Endothelial cell of umbilical vein (primary cell): ENCODE measurements at regions of chr15 and their contacts with region 1.

Region 1: DNA sequence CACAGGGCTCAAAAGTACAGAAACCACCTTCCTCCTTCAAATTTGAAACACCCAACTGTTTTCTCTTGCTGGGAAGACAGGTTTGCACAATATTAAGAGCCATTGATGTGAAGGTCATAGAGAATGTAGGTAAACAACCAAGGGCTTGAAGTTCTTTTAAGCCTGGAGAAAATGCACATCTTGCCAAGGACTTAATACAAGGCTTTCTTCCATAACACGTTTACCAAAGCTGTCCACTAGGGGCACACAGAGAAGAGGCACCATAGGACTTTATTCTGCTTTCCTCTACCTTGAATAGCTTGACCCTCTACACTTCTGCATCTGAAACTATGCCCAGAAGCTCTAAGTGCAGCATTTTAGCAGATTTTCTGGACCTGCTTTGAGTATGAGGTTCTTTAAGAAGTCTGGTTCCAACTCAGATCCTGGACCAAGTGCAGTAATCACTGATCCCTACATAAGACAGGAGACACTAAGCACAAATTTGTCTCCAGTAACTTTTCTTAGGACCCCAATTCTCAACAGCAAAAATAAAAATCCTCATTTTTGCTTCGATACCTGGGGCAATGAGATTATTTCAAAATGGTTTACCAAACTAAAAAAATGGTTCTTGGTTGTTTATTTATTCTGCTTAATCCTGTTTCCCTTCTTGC is 138.0 kb downstream of the FBN1 start:
- DNase-seq: peak; percentile 77
- H3K4me3 ChIP-seq: no peak overlapping the region
- H3K27ac ChIP-seq: no peak overlapping the region
- H3K4me1 ChIP-seq: peaks cover 5% of the 10 kb centered on the region
- H3K27me3 ChIP-seq: no peaks in the 10 kb centered on the region
- CTCF ChIP-seq: peak; percentile 65 to 73
- POLR2A ChIP-seq: no peak

Region 2: DNA sequence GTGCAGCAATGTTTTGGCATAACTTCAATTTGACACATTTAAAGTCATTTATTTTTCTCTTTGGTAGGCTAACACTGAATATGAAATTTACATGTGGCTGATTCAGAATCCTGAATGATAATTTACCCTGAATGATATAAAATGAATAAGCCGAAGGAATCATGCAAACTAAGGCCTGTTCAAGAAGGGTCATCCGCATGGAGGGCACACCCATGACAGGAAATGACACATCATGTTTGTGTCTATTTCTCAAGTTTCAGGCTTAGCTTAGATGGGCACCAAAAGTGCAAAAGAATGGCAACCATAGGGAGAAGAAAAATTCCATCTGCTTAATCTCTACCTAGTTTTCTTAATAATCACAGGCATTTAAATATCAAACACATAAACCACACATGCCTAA is 34.8 kb before region 1 on chr15:
- CTCF ChIA-PET with region 1: no interaction called
- POLR2A ChIA-PET with region 1: no interaction called
- dilution Hi-C with region 1: no loop called
- intact Hi-C with region 1: no loop called
- DNase-seq: peak; percentile 39
- H3K4me3 ChIP-seq: no peak overlapping the region
- H3K27ac ChIP-seq: no peak overlapping the region
- H3K4me1 ChIP-seq: peaks cover 12% of the 10 kb centered on the region
- H3K27me3 ChIP-seq: no peaks in the 10 kb centered on the region
- CTCF ChIP-seq: no peak
- POLR2A ChIP-seq: no peak

Region 3: GRCh38 chr15:48592221-48592731 is 84.7 kb after region 1 on chr15:
- CTCF ChIA-PET with region 1: interaction called, 3 read pairs
- POLR2A ChIA-PET with region 1: no interaction called
- dilution Hi-C with region 1: no loop called
- intact Hi-C with region 1: loop called (anchors 5 kb)
- DNase-seq: peak; percentile 69
- H3K4me3 ChIP-seq: no peak overlapping the region
- H3K27ac ChIP-seq: peak overlapping the region; percentile 10
- H3K4me1 ChIP-seq: peaks cover 12% of the 10 kb centered on the region
- H3K27me3 ChIP-seq: no peaks in the 10 kb centered on the region
- CTCF ChIP-seq: no peak
- POLR2A ChIP-seq: no peak

Region 4: DNA sequence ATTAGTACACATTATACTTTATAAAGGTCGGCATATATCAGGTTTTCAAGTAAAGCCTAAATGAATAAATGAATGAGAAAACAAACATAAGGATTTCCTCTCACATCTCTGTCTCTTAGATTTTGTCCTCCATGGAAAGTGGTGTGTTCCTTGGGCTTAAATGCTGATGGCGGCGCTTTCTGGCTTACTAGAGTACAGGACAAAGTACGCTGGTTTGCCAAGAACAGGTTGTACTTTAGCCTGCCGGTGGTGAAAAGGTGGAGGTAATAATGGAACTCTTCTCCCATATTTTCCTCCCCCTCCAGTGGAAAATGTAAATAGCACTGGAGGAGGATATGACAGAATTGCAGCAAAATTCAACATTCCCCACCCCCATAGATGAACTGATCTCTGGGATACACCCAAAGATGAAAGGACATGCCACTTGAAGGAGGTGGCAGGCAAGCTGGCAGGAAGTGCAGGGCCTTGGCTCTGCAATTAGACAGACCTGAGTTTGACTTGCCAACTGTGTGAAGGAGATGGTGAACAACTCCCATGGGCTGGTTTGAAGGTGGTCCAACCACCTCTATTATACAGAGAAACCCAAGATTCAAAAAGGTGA is 274.0 kb after region 1 on chr15:
- CTCF ChIA-PET with region 1: no interaction called
- POLR2A ChIA-PET with region 1: no interaction called
- dilution Hi-C with region 1: no loop called
- intact Hi-C with region 1: no loop called
- DNase-seq: no peak
- H3K4me3 ChIP-seq: no peak overlapping the region
- H3K27ac ChIP-seq: no peak overlapping the region
- H3K4me1 ChIP-seq: no peaks in the 10 kb centered on the region
- H3K27me3 ChIP-seq: no peaks in the 10 kb centered on the region
- CTCF ChIP-seq: no peak
- POLR2A ChIP-seq: no peak